Gastrocnemius medialis (tissue), 4 donors: ENCODE measurements at regions of chr3 and their contacts with region 1.

Region 1: GRCh38 chr3:14289590-14290461 is 111.2 kb downstream of the LSM3 start:
- DNase-seq: peak; percentile 62 to 79
- ATAC-seq: peak; percentile 84 to 88
- H3K4me3 ChIP-seq: no peak overlapping the region
- H3K27ac ChIP-seq: peak overlapping the region; percentile 84 to 94 (median 90)
- H3K4me1 ChIP-seq: peaks cover 29 to 49% of the 10 kb centered on the region in 2 donors
- H3K27me3 ChIP-seq: no peaks in the 10 kb centered on the region
- CTCF ChIP-seq: no peak
- POLR2A ChIP-seq: peak; percentile 41 to 54

Region 2: DNA sequence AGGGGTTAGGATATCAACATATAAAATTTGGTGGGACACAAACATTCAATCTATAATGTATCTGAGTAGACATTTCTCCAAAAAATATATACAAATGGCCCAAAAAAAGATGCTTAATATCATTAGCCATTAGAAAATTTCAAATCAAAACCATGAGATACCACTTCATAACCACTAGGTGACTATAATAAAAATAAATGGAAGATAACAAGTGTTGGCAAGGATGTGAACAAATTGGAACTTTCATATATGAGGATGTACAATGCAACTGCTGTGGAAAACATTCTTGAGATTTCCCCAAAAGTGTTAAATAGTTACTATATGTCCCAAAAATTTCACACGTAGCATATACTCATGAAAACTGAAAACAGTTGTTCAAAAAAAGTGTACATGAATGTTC is 373.5 kb before region 1 on chr3:
- in situ Hi-C with region 1: no loop called
- intact Hi-C with region 1: no loop called
- DNase-seq: no peak
- ATAC-seq: no peak
- H3K4me3 ChIP-seq: no peak overlapping the region
- H3K27ac ChIP-seq: no peak overlapping the region
- H3K4me1 ChIP-seq: no peaks in the 10 kb centered on the region
- H3K27me3 ChIP-seq: no peaks in the 10 kb centered on the region
- CTCF ChIP-seq: no peak
- POLR2A ChIP-seq: no peak

Region 3: GRCh38 chr3:14301558-14301957 is 11.7 kb after region 1 on chr3:
- in situ Hi-C with region 1: no loop called
- intact Hi-C with region 1: loop called (anchors 1 kb)
- DNase-seq: peak; percentile 91 to 98
- ATAC-seq: peak; percentile 73 to 80
- H3K4me3 ChIP-seq: no peak overlapping the region
- H3K27ac ChIP-seq: peak overlapping the region; percentile 80 to 87 (median 83)
- H3K4me1 ChIP-seq: peaks cover 41 to 50% of the 10 kb centered on the region in 2 donors
- H3K27me3 ChIP-seq: no peaks in the 10 kb centered on the region
- CTCF ChIP-seq: no peak
- POLR2A ChIP-seq: peak; percentile 62 to 66

Region 4: DNA sequence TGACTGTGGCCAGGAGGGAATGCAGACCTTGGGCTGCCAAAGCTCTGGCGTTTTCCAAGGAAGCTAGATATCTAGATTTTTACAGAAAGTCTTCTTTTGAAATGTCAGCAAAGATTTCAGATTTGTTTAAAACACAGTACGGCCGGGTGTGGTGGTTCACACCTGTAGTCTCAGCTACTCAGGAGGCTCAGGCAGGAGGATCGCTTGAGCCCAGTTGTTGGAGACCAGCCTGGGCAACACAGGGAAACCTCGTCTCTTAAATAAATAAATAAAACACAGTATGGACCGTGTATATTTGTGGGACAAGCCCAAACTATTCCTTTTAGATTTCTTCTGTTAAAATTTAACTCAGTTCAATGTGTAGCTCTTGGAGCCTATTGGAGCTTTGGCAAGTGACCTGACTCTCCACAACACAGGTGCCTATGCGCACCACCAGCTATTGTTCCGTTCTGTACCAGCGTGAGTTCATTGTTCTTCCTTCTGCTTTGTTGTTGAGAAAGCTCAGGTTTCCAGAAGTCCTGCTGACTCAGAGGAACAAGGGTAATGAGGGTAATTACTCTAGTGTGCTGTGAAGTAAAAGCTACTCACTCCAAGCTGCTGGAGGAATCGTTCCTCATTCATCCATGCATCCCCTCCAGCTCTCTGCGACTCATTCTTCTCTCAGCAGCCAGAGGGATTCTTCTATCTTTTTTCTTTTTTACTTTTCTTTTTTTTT is 39.4 kb after region 1 on chr3:
- in situ Hi-C with region 1: loop called in 1 of 4 experiments (anchors 5 kb)
- intact Hi-C with region 1: loop called (anchors 1 kb)
- DNase-seq: no peak
- ATAC-seq: peak in 1 of 2 donors; percentile 46
- H3K4me3 ChIP-seq: no peak overlapping the region
- H3K27ac ChIP-seq: peak overlapping the region; percentile 44 to 95 (median 79)
- H3K4me1 ChIP-seq: peaks cover 19 to 36% of the 10 kb centered on the region in 2 donors
- H3K27me3 ChIP-seq: no peaks in the 10 kb centered on the region
- CTCF ChIP-seq: no peak
- POLR2A ChIP-seq: no peak

Region 5: DNA sequence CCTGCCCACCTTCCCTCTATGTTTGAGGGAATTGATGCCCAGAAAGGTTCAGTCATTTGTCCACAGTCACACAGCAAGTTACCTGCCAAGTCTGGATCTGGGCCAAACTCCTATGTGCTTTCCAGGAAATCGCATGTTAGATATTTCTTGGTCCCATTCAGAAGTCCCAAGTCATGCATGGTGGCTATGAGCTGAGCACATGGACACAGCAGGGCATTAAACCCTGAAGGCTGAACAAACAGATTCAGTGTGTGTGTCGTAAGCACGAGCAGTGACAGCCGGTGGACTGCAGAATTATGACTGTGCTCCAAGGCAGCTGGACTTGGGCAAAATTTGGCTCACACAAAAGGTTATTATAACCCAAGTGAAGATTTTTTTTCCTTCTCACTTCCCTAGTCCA is 101.2 kb after region 1 on chr3:
- in situ Hi-C with region 1: loop called in 1 of 4 experiments (anchors 10 kb)
- intact Hi-C with region 1: loop called (anchors 2 kb)
- DNase-seq: peak; percentile 88 to 94
- ATAC-seq: peak; percentile 86 to 87
- H3K4me3 ChIP-seq: no peak overlapping the region
- H3K27ac ChIP-seq: peak overlapping the region; percentile 90 to 99 (median 94)
- H3K4me1 ChIP-seq: peaks cover 31 to 34% of the 10 kb centered on the region in 2 donors
- H3K27me3 ChIP-seq: no peaks in the 10 kb centered on the region
- CTCF ChIP-seq: no peak
- POLR2A ChIP-seq: peak in 1 of 2 donors; percentile 21